T-cell (primary cell): ENCODE measurements at regions of chr17 and their contacts with region 1.

Region 1: DNA sequence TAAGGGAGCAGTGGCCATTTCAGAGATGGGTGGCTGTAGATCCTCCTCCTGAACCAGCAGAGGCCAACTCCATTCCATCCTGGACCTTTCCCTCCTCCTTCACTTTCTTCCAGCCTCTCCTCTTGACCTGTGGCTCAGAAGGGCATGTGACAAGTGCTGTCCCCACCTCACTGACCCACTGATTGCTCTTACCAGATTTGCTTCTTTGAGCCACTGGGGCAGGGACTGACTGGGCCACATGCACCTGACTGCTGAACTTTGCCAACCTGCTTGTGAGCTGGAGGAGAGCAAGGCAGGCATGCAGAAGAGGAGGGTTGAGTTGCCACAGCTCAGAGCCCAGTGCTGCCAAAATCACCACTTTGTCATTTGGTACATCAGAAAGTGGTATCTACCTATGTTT is 68.3 kb downstream of the MSI2 start:
- DNase-seq: no peak
- ATAC-seq: no peak
- H3K4me3 ChIP-seq: no peak overlapping the region
- H3K4me3 Mint-ChIP-seq: no peak overlapping the region
- H3K27ac ChIP-seq: no peak overlapping the region
- H3K27ac Mint-ChIP-seq: no peak overlapping the region
- H3K4me1 ChIP-seq: no peaks in the 10 kb centered on the region
- H3K4me1 Mint-ChIP-seq: peaks cover 31 to 42% (median 35%) of the 10 kb centered on the region in 3 donors
- H3K27me3 ChIP-seq: no peaks in the 10 kb centered on the region
- H3K27me3 Mint-ChIP-seq: no peaks in the 10 kb centered on the region

Region 2: GRCh38 chr17:56880133-56880532 is 444.5 kb before region 1 on chr17:
- CTCF ChIA-PET with region 1: no interaction called
- POLR2A ChIA-PET with region 1: interaction called in 1 of 2 experiments, 13 read pairs
- DNase-seq: no peak
- ATAC-seq: no peak
- H3K4me3 ChIP-seq: no peak overlapping the region
- H3K4me3 Mint-ChIP-seq: no peak overlapping the region
- H3K27ac ChIP-seq: no peak overlapping the region
- H3K27ac Mint-ChIP-seq: no peak overlapping the region
- H3K4me1 ChIP-seq: no peaks in the 10 kb centered on the region
- H3K4me1 Mint-ChIP-seq: peaks cover 0 to 6% (median 2%) of the 10 kb centered on the region in 3 donors
- H3K27me3 ChIP-seq: no peaks in the 10 kb centered on the region
- H3K27me3 Mint-ChIP-seq: no peaks in the 10 kb centered on the region

Region 3: GRCh38 chr17:57338257-57338914 is 13.8 kb after region 1 on chr17:
- CTCF ChIA-PET with region 1: no interaction called
- POLR2A ChIA-PET with region 1: no interaction called
- DNase-seq: no peak
- ATAC-seq: no peak
- H3K4me3 ChIP-seq: no peak overlapping the region
- H3K4me3 Mint-ChIP-seq: no peak overlapping the region
- H3K27ac ChIP-seq: no peak overlapping the region
- H3K27ac Mint-ChIP-seq: no peak overlapping the region
- H3K4me1 ChIP-seq: peaks cover 0 to 12% of the 10 kb centered on the region in 2 experiments
- H3K4me1 Mint-ChIP-seq: peaks cover 48 to 69% (median 59%) of the 10 kb centered on the region in 3 donors
- H3K27me3 ChIP-seq: no peaks in the 10 kb centered on the region
- H3K27me3 Mint-ChIP-seq: no peaks in the 10 kb centered on the region

Region 4: GRCh38 chr17:57463103-57463851 is 138.6 kb after region 1 on chr17:
- CTCF ChIA-PET with region 1: no interaction called
- POLR2A ChIA-PET with region 1: no interaction called
- DNase-seq: no peak
- ATAC-seq: peak in 2 of 4 experiments; percentile 17 to 51
- H3K4me3 ChIP-seq: no peak overlapping the region
- H3K4me3 Mint-ChIP-seq: no peak overlapping the region
- H3K27ac ChIP-seq: no peak overlapping the region
- H3K27ac Mint-ChIP-seq: peak overlapping the region in 1 of 2 donors; percentile 48
- H3K4me1 ChIP-seq: peaks cover 0 to 37% of the 10 kb centered on the region in 2 experiments
- H3K4me1 Mint-ChIP-seq: peaks cover 51 to 75% (median 63%) of the 10 kb centered on the region in 3 donors
- H3K27me3 ChIP-seq: no peaks in the 10 kb centered on the region
- H3K27me3 Mint-ChIP-seq: no peaks in the 10 kb centered on the region